Heart right ventricle (tissue), 16 donors: ENCODE measurements at regions of chr5 and their contacts with region 1.

Region 1: GRCh38 chr5:170267431-170268152 is 30.0 kb downstream of the LCP2 start:
- DNase-seq: peak; percentile 72 to 80
- ATAC-seq: peak; percentile 61 to 81 (median 74)
- H3K4me3 ChIP-seq: peak overlapping the region in 2 of 10 donors; percentile 17 to 18
- H3K27ac ChIP-seq: peak overlapping the region in 3 of 10 donors; percentile 8 to 88 (median 16)
- H3K4me1 ChIP-seq: peaks cover 0 to 81% (median 13%) of the 10 kb centered on the region in 9 donors
- H3K27me3 ChIP-seq: peaks cover 0 to 16% (median 0%) of the 10 kb centered on the region in 7 donors
- CTCF ChIP-seq: peak; percentile 78 to 90 (median 85)

Region 2: GRCh38 chr5:170338933-170339779 is 71.6 kb after region 1 on chr5:
- intact Hi-C with region 1: loop called in 3 of 10 experiments (anchors 2 to 5 kb)
- DNase-seq: no peak
- ATAC-seq: peak in 5 of 8 donors; percentile 43 to 58 (median 51)
- H3K4me3 ChIP-seq: no peak overlapping the region
- H3K27ac ChIP-seq: no peak overlapping the region
- H3K4me1 ChIP-seq: peaks cover 0 to 49% (median 0%) of the 10 kb centered on the region in 9 donors
- H3K27me3 ChIP-seq: no peaks in the 10 kb centered on the region
- CTCF ChIP-seq: peak; percentile 19 to 72 (median 46)

Region 3: DNA sequence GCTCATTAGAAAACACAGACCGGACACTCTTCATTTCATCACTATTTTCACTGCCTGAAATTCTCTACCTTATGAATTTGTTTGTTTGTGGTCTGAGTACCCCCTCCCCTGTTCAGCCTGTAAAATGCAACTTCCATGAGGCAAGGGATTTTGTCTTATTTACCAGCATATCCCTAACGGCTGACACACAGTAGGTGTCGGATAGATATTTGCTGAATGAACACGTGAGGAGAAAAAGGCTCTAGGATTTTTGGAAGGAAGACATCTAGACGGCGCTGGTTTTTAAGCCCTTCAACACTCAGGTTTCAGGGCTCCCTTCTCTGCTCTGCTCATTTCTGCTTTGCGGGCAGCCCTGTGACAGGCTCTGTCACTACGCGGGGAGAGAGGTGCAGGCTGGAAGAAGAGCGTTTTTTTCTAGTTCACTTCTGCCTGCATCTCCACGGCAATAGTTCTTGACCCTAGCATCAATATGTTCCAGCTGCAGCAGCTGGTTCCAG is 80.6 kb after region 1 on chr5:
- intact Hi-C with region 1: loop called in 3 of 10 experiments (anchors 5 kb)
- DNase-seq: no peak
- ATAC-seq: peak in 6 of 8 donors; percentile 22 to 68 (median 50)
- H3K4me3 ChIP-seq: no peak overlapping the region
- H3K27ac ChIP-seq: peak overlapping the region in 3 of 10 donors; percentile 6 to 43 (median 21)
- H3K4me1 ChIP-seq: peaks cover 0 to 22% (median 9%) of the 10 kb centered on the region in 9 donors
- H3K27me3 ChIP-seq: peaks cover 0 to 45% (median 20%) of the 10 kb centered on the region in 7 donors
- CTCF ChIP-seq: peak in 8 of 9 donors; percentile 7 to 56 (median 35)

Region 4: DNA sequence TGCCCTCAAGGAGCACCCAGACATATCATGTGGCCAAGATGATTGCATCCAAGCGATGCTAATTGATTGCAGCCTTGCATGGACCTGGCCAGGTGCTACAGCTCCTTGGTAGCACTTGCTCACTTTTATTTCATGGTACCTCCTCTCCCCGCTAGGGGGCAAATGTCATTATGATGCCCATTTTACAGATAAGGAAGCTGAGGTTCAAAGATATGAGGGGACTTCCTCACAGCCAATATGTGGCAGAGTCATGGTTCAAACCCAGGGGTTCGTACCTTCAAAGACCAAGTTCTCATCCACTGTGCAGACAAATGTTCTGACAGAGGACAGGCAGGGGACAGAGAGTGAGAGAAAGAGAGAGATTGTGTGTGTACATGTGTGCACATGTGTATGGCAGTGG is 143.5 kb after region 1 on chr5:
- intact Hi-C with region 1: loop called in 1 of 10 experiments (anchors 10 kb)
- DNase-seq: no peak
- ATAC-seq: no peak
- H3K4me3 ChIP-seq: no peak overlapping the region
- H3K27ac ChIP-seq: no peak overlapping the region
- H3K4me1 ChIP-seq: peaks cover 0 to 10% (median 0%) of the 10 kb centered on the region in 9 donors
- H3K27me3 ChIP-seq: peaks cover 0 to 3% (median 0%) of the 10 kb centered on the region in 7 donors
- CTCF ChIP-seq: peak in 1 of 9 donors; percentile 18